ENCODE measurements at regions of chr20 and their contacts with region 1.

Region 1: DNA sequence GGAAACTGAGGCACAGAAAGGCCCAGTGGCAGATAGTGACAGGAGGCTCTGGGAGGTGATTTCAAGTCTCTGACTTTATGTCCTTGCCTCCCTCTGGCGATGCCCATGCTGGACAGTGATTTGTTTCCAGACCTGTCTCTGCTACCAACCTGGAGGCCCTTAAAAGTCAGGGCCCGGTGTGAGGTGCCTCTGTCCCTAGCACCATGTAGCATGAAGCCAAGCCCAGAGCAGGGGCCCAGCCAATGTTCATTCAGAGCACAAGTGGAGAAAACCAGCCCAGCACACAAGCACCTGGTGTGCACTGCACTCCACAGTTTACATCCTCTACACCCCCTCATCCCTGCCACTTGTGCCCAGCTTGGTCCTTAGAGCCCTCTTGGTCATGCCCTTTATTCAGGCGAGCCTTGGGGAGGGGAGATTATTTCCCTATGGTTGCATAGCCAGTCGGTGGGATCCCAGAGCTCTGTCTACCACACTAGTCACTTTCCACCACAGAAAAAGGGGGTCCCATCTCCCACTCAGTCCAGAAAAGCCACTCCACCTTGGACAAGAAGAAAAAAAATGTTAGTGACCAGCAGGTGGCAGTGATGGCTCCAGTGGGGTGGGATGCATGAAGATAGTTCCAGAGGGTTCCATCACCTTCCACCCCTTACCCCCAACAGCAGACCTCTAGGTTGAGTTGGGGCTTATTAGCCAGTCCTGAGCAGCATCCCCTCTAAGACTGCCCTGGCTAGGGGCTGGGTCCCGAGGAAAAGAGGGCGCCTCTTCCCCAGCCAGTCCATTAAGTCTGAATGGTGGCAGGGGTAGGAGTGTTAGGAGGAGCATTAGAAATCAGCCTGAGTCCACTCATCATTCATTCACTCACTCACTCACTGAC is 30.9 kb downstream of the KIAA1755 start:
- DNase-seq: peak in 1 of 2 experiments; percentile 26
- H3K4me3 ChIP-seq: no peak overlapping the region
- H3K27ac ChIP-seq: no peak overlapping the region
- H3K4me1 ChIP-seq: no peaks in the 10 kb centered on the region
- H3K27me3 ChIP-seq: peaks cover 3% of the 10 kb centered on the region; the same call in 1 of the 2 replicates
- CTCF ChIP-seq: peak; percentile 80

Region 2: DNA sequence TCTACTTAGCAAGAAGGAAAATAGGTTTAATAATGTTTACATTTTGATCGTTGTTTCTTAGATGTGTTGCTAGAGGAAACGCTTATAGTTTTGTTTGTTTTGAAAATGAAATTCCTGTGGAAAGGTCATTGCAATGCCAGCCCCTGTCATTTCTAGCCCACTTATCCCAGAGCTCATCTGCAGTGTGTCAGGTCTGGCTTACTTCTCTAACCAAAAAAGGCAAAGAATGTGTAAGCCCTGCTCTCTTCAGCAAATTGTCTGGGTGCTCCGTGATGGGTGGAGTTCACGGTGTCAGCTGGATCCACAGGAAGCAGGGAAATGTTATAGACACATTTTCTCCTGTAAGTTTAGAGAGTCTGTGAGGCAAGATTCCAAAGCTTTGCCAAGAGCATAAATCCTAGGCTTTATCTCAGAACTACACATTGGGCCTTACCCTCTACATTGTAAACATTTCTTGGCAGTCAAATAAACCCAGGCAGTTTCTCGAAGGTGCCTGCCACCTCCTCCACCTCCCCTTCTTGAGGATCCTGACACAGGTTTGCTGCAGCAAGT is 145.1 kb before region 1 on chr20:
- CTCF ChIA-PET with region 1: no interaction called
- POLR2A ChIA-PET with region 1: no interaction called
- intact Hi-C with region 1: no loop called
- DNase-seq: peak in 1 of 2 experiments; percentile 48
- H3K4me3 ChIP-seq: no peak overlapping the region
- H3K27ac ChIP-seq: no peak overlapping the region
- H3K4me1 ChIP-seq: no peaks in the 10 kb centered on the region
- H3K27me3 ChIP-seq: no peaks in the 10 kb centered on the region
- CTCF ChIP-seq: no peak

Region 3: GRCh38 chr20:38290832-38291581 is 61.4 kb after region 1 on chr20:
- CTCF ChIA-PET with region 1: no interaction called
- POLR2A ChIA-PET with region 1: no interaction called
- intact Hi-C with region 1: loop called (anchors 1 kb)
- DNase-seq: peak; percentile 53 to 66
- H3K4me3 ChIP-seq: peak overlapping the region; percentile 20; the same call in 1 of the 2 replicates
- H3K27ac ChIP-seq: no peak overlapping the region
- H3K4me1 ChIP-seq: peaks cover 9% of the 10 kb centered on the region; the same call in 1 of the 2 replicates
- H3K27me3 ChIP-seq: no peaks in the 10 kb centered on the region
- CTCF ChIP-seq: peak; percentile 72

Region 4: DNA sequence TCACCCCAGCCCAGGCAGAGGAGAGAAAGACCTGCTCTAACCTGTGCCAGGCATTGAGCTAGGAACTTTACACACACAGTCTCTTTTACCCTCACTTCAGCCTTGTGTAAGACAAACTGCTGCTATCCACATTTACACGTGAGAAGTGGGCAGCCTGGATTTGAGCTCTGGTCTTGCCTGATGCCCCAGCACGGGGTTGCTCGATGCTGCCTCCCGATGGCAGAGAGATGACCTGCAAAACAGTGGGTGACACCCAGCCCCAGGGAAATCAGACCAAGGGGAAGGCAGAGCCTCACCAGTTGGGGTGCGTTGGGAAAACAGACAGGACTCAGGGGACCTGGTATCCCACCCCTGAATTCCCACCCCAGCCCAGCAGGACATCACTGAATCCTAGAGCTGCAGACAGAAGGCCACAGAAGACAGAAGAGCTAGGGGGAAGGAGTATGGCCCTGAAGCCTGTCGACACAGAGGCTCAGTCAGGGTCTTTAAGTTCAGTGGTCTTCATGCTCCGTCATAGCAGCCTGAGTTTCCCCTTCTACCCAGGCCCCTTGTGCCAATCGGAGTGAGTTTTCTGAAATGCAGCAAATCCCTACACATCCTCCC is 75.3 kb after region 1 on chr20:
- CTCF ChIA-PET with region 1: no interaction called
- POLR2A ChIA-PET with region 1: no interaction called
- intact Hi-C with region 1: loop called (anchors 5 kb)
- DNase-seq: peak in 1 of 2 experiments; percentile 51
- H3K4me3 ChIP-seq: no peak overlapping the region
- H3K27ac ChIP-seq: no peak overlapping the region
- H3K4me1 ChIP-seq: peaks cover 9% of the 10 kb centered on the region
- H3K27me3 ChIP-seq: peaks cover 20% of the 10 kb centered on the region; the same call in 1 of the 2 replicates
- CTCF ChIP-seq: peak; percentile 70

Region 5: DNA sequence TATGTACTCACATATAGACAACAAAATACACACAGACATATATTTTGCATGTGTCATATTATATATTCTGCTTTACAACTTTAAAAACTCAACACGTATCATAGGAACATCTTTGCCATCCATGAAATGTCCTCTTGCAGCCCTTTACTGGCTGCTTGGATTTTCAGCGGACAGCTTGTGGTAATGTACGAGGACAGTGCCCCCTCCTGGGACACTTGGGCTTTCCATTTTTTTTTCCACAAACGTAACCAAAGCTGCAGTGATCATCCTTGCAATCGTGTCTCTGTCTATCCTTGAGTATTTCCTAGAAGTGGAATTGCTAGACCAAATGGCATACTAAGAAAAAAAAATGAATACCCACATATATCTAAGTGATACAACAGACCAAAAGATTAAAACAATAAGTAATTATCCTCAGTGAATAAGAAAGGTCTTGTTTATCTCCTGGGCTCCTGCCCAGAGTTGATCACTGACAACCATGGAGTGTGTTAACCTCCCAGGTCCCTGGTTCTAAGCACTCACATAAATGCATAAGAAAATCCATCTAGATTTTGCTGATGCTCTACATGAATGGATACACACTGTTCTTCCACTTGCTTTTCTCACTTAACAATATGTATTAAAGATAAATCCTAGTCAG is 92.5 kb after region 1 on chr20:
- CTCF ChIA-PET with region 1: interaction called, 3 read pairs
- POLR2A ChIA-PET with region 1: no interaction called
- intact Hi-C with region 1: loop called (anchors 1 kb)
- DNase-seq: peak in 1 of 2 experiments; percentile 47
- H3K4me3 ChIP-seq: no peak overlapping the region
- H3K27ac ChIP-seq: no peak overlapping the region
- H3K4me1 ChIP-seq: no peaks in the 10 kb centered on the region
- H3K27me3 ChIP-seq: peaks cover 49% of the 10 kb centered on the region
- CTCF ChIP-seq: peak; percentile 81

Region 6: DNA sequence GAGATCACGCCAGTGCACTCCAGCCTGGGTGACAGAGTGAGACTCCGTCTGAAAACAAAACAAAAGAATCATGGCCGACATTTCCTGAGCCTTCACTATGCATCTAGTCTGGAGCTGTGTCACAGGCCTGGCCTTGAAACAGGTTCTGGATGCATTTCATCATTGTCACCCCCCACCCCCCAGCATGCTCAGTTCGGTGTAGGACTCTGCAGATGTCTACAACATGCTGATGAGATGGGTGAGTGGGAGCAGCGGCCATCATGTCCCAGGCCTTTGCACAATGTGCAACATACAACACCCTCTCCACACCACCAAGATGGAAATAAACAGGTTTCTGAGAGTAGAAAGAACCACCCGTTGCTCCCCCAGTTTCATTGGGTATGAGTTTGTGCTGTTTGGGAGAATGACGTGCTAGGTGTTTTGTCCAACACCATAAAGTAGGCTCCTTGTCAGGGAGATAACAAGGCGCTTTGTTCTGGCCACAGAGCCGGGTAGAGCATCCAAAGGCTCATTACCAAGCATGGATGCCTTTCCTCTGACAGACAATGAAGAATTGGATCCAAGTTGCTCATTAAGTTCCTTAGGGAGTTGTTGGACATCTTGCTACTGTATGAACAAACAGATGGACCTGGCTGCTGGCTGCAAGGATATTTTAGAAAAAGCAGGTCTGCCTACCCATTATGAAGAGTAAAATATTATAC is 183.4 kb after region 1 on chr20:
- CTCF ChIA-PET with region 1: no interaction called
- POLR2A ChIA-PET with region 1: no interaction called
- intact Hi-C with region 1: loop called (anchors 1 kb)
- DNase-seq: no peak
- H3K4me3 ChIP-seq: no peak overlapping the region
- H3K27ac ChIP-seq: no peak overlapping the region
- H3K4me1 ChIP-seq: no peaks in the 10 kb centered on the region
- H3K27me3 ChIP-seq: no peaks in the 10 kb centered on the region
- CTCF ChIP-seq: no peak